ENCODE measurements at regions of chr3 and their contacts with region 1.

Region 1: GRCh38 chr3:196432137-196432879 is at the start of gene UBXN7:
- DNase-seq: peak; percentile 96 to 100 (median 100)
- ATAC-seq: peak; percentile 91
- H3K4me3 ChIP-seq: peak within 1 kb of the TSS; percentile 90
- H3K27ac ChIP-seq: peak within 1 kb of the TSS; percentile 84
- H3K4me1 ChIP-seq: peaks cover 10 to 22% of the 10 kb centered on the region in 2 experiments; a peak in 4 of 5 replicates
- H3K27me3 ChIP-seq: no peaks in the 10 kb centered on the region
- CTCF ChIP-seq: no peak
- EP300 ChIP-seq: peak; percentile 26; the same call in 1 of the 2 replicates
- POLR2A ChIP-seq: peak; percentile 79
- RAD21 ChIP-seq: no peak
- polyA plus RNA-seq, gene UBXN7: 3.5 to 3.9 TPM

Region 2: GRCh38 chr3:196274585-196274984 is 157.7 kb before region 1 on chr3:
- CTCF ChIA-PET with region 1: no interaction called
- POLR2A ChIA-PET with region 1: no interaction called
- in situ Hi-C with region 1: no loop called
- intact Hi-C with region 1: loop called (anchors 5 kb)
- DNase-seq: peak; percentile 42 to 84 (median 60)
- ATAC-seq: peak; percentile 74
- H3K4me3 ChIP-seq: peak overlapping the region; percentile 2; the same call in 1 of the 2 replicates
- H3K27ac ChIP-seq: peak overlapping the region; percentile 66
- H3K4me1 ChIP-seq: peaks cover 32 to 33% of the 10 kb centered on the region in 2 experiments
- H3K27me3 ChIP-seq: no peaks in the 10 kb centered on the region
- CTCF ChIP-seq: no peak
- EP300 ChIP-seq: peak; percentile 60
- POLR2A ChIP-seq: no peak
- RAD21 ChIP-seq: no peak

Region 3: GRCh38 chr3:196735751-196736150 is 303.4 kb after region 1 on chr3:
- CTCF ChIA-PET with region 1: no interaction called
- POLR2A ChIA-PET with region 1: no interaction called
- in situ Hi-C with region 1: no loop called
- intact Hi-C with region 1: no loop called
- DNase-seq: no peak
- ATAC-seq: no peak
- H3K4me3 ChIP-seq: no peak overlapping the region
- H3K27ac ChIP-seq: no peak overlapping the region
- H3K4me1 ChIP-seq: no peaks in the 10 kb centered on the region; a peak in 1 of 5 replicates
- H3K27me3 ChIP-seq: no peaks in the 10 kb centered on the region
- CTCF ChIP-seq: no peak
- EP300 ChIP-seq: no peak
- POLR2A ChIP-seq: no peak
- RAD21 ChIP-seq: no peak

Region 4: GRCh38 chr3:196754091-196754923 is 322.0 kb after region 1 on chr3:
- CTCF ChIA-PET with region 1: no interaction called
- POLR2A ChIA-PET with region 1: no interaction called
- in situ Hi-C with region 1: no loop called
- intact Hi-C with region 1: no loop called
- DNase-seq: no peak
- ATAC-seq: peak; percentile 39
- H3K4me3 ChIP-seq: no peak overlapping the region
- H3K27ac ChIP-seq: no peak overlapping the region
- H3K4me1 ChIP-seq: peaks cover 4 to 6% of the 10 kb centered on the region in 2 experiments; a peak in 3 of 5 replicates
- H3K27me3 ChIP-seq: no peaks in the 10 kb centered on the region
- CTCF ChIP-seq: no peak
- EP300 ChIP-seq: no peak
- POLR2A ChIP-seq: no peak
- RAD21 ChIP-seq: no peak

Measured in K562 (cell line).